GM13976 (cell line): ENCODE measurements at regions of chr2 and their contacts with region 1.

Region 1: DNA sequence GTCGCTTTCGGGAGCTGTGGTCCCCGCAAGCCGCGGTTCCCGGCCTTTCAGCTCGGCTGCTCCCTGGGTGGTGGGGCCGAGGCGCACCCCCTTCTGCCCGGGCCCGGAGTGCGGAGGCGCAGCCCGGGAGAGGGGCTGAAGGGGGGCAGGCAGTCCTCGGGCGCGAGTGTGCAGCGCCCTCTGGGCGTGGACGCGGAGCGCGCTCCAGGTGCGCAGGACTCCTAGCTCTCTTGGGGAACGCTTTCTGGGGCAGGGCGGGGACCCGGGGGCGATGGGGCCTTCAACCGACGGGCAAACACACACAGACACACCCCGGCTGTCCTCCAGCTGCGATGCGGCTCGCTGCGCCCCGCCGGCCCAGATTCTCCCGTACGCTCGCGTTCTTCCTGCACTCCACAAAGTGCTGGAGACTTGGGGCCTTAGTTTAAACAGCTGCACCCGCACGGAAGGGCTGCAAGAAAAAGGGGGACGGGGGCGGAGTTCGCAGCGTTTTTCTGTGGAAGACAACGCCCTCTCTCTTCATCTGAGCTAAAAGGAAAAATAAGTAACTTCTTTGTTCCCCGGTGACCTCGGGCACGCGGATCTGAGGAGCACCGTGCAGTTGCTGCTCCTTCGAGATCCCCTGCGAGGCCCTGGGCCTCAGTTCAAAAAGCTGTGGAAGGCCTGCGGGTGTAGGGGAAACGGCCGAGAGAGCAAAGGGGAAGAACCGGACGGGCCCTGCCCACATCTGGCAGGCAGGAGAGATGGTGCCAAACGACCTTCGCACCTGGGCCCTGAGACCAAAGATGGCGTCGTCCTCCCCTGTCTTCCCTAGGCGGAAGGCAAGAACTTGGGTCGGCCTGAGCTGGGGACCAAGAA is 593 bp upstream of the SDC1 start:
- DNase-seq: peak; percentile 88
- CTCF ChIP-seq: peak; percentile 74

Region 2: DNA sequence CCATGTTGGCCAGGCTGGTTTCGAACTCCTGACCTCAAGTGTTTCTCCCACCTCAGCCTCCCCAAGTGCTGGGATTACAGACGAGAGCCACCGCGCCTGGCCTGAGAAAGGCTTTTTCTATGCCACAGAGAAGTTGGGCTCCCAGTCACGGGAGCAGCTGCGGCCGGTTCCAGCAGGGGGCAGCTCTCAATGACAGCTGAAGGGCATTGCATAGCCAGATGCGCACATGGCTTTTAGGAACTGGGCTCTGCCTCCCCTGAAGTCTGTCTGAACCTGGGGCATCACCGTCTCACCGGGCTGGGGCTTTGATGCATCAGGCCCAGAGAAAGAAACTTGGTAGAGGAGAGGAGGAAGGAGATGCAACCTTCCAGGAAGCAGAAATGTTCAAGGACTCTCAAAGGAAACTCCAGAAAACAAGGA is 89.9 kb before region 1 on chr2:
- in situ Hi-C with region 1: loop called (anchors 10 kb)
- DNase-seq: peak; percentile 87
- CTCF ChIP-seq: peak; percentile 93